ENCODE measurements at regions of chr1 and their contacts with region 1.

Region 1: DNA sequence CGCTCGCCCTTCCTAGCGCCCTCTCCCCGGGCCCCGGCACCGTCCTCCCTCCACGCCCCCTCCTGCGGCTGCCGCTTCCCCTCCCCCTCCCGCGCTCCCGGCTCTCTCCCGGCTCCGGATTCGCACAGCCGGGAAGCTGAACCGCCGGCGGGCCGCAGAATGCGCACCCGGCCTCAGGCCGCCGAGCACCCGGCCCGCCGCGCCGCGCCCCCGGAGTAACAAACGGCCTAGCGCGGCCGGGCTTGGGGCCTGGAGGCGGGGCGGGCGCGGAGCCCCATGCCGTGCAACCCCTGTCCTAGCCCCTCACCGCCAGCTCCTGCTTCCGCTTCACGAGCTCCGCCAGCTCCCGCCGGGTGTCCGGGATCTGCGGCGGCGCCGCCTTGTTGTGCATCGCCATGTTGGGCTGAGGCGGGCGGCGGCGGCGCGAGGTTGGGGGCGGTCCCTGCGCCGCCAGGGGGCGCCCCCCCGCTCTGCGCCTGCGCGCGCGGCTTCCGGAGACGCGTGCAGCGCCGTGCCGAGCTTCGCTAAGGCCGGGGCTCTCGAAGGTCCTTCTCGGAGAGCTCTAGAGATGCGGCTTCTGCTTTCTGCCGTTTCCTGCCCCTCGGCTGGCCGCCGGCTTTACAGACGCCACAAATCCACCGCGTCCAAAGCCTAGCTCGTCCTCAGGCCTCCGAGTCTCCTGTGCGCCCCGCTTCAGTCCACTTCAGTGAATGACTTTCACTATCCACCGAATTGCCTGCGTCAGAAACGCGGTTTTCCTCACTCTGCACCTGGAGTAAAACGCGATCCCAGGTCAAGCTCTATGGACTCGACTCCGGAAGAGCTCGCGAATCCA is at the start of gene MEAF6:
- DNase-seq: peak; percentile 57 to 88 (median 71)
- H3K4me3 ChIP-seq: peak within 1 kb of the TSS; percentile 63 to 97 (median 87)
- H3K27ac ChIP-seq: peak within 1 kb of the TSS; percentile 53 to 99 (median 94)
- H3K27me3 ChIP-seq: no peaks in the 10 kb centered on the region
- CTCF ChIP-seq: peak; percentile 25 to 97 (median 76)
- total RNA-seq, gene MEAF6: 44.2 to 132 (median 98.7) TPM

Region 2: GRCh38 chr1:37423810-37424209 is 90.8 kb before region 1 on chr1:
- intact Hi-C with region 1: no loop called
- DNase-seq: no peak
- H3K4me3 ChIP-seq: no peak overlapping the region
- H3K27ac ChIP-seq: no peak overlapping the region
- H3K27me3 ChIP-seq: no peaks in the 10 kb centered on the region
- CTCF ChIP-seq: no peak

Region 3: GRCh38 chr1:37479255-37480124 is 35.1 kb before region 1 on chr1:
- intact Hi-C with region 1: loop called in 1 of 2 experiments (anchors 5 kb)
- DNase-seq: peak in 4 of 10 donors; percentile 49 to 76 (median 62)
- H3K4me3 ChIP-seq: peak overlapping the region in 37 of 59 donors; percentile 1 to 46 (median 17)
- H3K27ac ChIP-seq: peak overlapping the region in 45 of 59 donors; percentile 1 to 84 (median 55)
- H3K27me3 ChIP-seq: no peaks in the 10 kb centered on the region
- CTCF ChIP-seq: no peak

Region 4: GRCh38 chr1:37553927-37554808 is 39.6 kb after region 1 on chr1 and contains the start of gene SNIP1:
- intact Hi-C with region 1: loop called in 1 of 2 experiments (anchors 2 kb)
- DNase-seq: peak; percentile 91 to 99 (median 98)
- H3K4me3 ChIP-seq: peak within 1 kb of the TSS; percentile 70 to 100 (median 96)
- H3K27ac ChIP-seq: peak within 1 kb of the TSS in 52 of 59 donors; percentile 1 to 91 (median 76)
- H3K27me3 ChIP-seq: no peaks in the 10 kb centered on the region
- CTCF ChIP-seq: peak in 27 of 56 donors; percentile 14 to 57 (median 35)
- total RNA-seq, gene SNIP1: 8.4 to 24.4 (median 16.7) TPM

Region 5: GRCh38 chr1:37595440-37596319 is 81.1 kb after region 1 on chr1 and contains the start of gene GNL2:
- intact Hi-C with region 1: loop called in 1 of 2 experiments (anchors 5 kb)
- DNase-seq: peak; percentile 93 to 98 (median 96)
- H3K4me3 ChIP-seq: peak within 1 kb of the TSS; percentile 63 to 99 (median 91)
- H3K27ac ChIP-seq: peak within 1 kb of the TSS in 51 of 59 donors; percentile 11 to 89 (median 57)
- H3K27me3 ChIP-seq: no peaks in the 10 kb centered on the region
- CTCF ChIP-seq: peak in 42 of 56 donors; percentile 9 to 61 (median 32)
- total RNA-seq, gene GNL2: 13.0 to 31.1 (median 20.2) TPM

Region 6: DNA sequence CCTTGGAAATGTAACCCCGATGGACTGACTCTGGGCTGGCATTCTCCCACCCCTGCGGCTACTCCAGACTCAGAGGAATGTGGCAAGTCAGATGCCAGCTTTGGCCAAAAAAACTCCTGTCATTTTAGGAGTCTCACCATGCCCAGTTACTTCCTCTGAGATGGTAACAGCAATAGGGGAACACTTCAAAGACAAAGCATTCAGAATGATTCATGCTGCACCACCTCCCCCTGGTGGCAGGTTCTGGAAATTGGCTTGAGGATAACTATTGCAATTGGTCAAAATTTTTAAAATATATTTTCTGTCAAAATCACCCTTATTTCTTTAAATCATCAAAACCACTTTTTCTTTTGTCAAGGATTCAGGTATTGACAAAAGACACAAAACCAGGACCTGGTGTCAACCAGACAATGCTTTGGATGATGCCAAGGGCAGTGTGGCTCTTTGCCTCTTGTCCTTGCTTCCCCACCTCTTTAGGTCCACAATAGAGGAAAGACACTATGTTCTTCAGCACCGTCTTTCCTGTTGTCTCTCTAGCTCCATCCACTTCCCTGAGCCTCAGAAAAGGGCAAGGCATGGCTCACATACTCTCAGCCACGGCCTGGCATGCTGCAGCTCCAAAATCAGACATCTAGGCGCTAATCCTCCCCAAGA is 167.9 kb after region 1 on chr1:
- intact Hi-C with region 1: loop called in 1 of 2 experiments (anchors 10 kb)
- DNase-seq: peak in 9 of 10 donors; percentile 60 to 93 (median 75)
- H3K4me3 ChIP-seq: no peak overlapping the region
- H3K27ac ChIP-seq: peak overlapping the region in 2 of 59 donors; percentile 38 to 62
- H3K27me3 ChIP-seq: no peaks in the 10 kb centered on the region
- CTCF ChIP-seq: peak; percentile 85 to 99 (median 93)